ENCODE measurements at regions of chr7 and their contacts with region 1.

Region 1: DNA sequence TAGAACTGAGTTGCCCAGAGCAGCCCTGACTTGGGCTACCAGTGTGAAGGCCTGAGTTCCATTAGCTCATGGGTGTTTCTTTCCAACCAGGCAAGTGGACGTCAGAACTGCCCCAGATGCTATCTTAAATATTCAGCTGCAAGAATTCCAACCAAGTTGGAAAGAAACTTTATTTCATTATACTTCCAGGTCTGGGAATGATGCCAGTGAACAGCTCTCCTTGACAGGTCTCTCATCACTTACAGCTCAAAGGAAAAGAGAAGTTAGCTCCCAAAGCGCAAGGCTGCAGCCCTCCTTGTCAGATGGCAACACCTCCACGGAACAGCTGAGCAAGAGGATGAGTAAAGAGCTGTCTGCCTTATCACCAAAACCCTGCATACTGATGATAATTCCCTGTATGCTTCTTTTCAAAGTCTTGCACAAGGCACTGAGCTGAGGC is 255.5 kb upstream of the AOAH start:
- DNase-seq: no peak
- ATAC-seq: no peak
- H3K4me3 ChIP-seq: no peak overlapping the region
- H3K27ac ChIP-seq: no peak overlapping the region
- H3K4me1 ChIP-seq: no peaks in the 10 kb centered on the region
- H3K27me3 ChIP-seq: no peaks in the 10 kb centered on the region
- CTCF ChIP-seq: no peak
- POLR2A ChIP-seq: no peak
- RAD21 ChIP-seq: no peak

Region 2: DNA sequence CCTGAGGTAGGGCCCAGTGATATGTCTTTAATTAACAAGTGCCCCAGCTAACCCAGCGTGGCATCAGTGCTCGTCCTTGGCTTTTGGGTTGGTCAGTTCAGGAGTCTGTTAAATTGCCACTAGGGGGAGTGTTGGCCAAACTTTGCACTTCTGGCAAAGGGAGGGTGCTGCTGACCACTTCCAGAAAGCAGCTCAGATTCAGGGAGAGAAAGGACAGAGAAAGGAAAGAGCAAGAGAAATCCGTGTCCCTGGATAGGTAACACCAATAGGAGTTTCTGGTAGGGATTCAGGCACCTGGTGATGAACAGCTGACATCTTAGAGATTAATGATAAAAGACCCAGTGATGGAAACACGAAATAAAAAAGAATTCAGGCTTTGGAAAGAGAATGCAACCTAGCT is 12.4 kb before region 1 on chr7:
- CTCF ChIA-PET with region 1: interaction called, 15 read pairs
- POLR2A ChIA-PET with region 1: no interaction called
- RAD21 ChIA-PET with region 1: no interaction called
- intact Hi-C with region 1: no loop called
- DNase-seq: peak; percentile 78
- ATAC-seq: peak; percentile 98
- H3K4me3 ChIP-seq: no peak overlapping the region
- H3K27ac ChIP-seq: no peak overlapping the region
- H3K4me1 ChIP-seq: peaks cover 0 to 6% of the 10 kb centered on the region in 2 experiments; a peak in 1 of 4 replicates
- H3K27me3 ChIP-seq: no peaks in the 10 kb centered on the region
- CTCF ChIP-seq: peak; percentile 72 to 86 (median 74); a peak in 5 of 6 replicates
- POLR2A ChIP-seq: no peak
- RAD21 ChIP-seq: peak; percentile 82